ENCODE measurements at regions of chr3 and their contacts with region 1.

Region 1: GRCh38 chr3:119676771-119677640 is at the start of gene COX17:
- DNase-seq: peak; percentile 87
- ATAC-seq: peak; percentile 83
- H3K4me3 Mint-ChIP-seq: peak within 1 kb of the TSS; percentile 96
- H3K27ac Mint-ChIP-seq: peak within 1 kb of the TSS; percentile 98
- H3K4me1 Mint-ChIP-seq: peaks cover 28% of the 10 kb centered on the region
- H3K27me3 Mint-ChIP-seq: no peaks in the 10 kb centered on the region
- CTCF ChIP-seq: no peak
- total RNA-seq, gene COX17: 58.8 and 58.9 TPM in 2 replicates

Region 2: DNA sequence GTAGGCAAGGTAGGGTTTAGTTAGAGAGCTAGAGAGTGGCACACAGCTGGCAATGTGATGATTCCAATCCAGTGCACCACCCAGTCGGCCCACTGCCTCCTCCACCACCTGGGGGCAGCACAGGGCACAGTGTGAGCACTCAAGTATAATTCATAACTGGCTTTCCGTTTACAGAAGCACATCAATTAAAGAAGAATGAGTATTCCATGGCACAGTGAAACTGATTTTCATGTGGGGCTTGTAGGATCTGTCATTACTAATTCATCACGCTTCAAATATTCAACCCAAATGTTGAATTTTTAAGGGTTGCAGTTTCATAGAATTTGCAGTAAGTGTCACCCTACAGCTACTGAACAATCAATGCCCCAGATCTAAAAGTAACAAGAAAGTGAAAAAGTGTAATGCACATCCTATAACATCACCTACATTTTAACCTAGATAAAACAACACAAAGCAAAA is 792.2 kb before region 1 on chr3:
- CTCF ChIA-PET with region 1: interaction called, 47 read pairs
- POLR2A ChIA-PET with region 1: no interaction called
- intact Hi-C with region 1: loop called (anchors 1 kb)
- DNase-seq: peak; percentile 44
- ATAC-seq: peak; percentile 75
- H3K4me3 Mint-ChIP-seq: no peak overlapping the region
- H3K27ac Mint-ChIP-seq: no peak overlapping the region
- H3K4me1 Mint-ChIP-seq: no peaks in the 10 kb centered on the region
- H3K27me3 Mint-ChIP-seq: peaks cover 20% of the 10 kb centered on the region
- CTCF ChIP-seq: peak; percentile 74

Region 3: DNA sequence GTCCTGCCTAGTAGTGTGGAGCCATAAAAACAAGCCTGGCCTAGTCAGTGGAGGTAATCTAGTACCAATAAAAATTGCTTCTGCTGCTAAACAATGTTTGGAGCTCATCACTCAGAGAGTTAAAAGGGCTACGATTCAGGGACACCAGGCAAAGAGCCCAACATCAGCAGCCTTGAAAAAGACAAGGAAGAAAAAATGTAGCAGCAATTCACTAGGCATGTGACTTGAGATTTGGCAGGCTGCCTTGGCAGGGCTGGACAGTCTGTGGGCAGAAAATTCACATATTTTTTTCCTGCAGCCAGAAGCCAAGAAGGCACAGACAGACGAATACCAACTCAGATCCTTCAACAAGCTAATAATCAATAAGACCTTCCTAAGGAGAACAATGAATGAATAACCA is 689.5 kb before region 1 on chr3:
- CTCF ChIA-PET with region 1: no interaction called
- POLR2A ChIA-PET with region 1: no interaction called
- intact Hi-C with region 1: no loop called
- DNase-seq: no peak
- ATAC-seq: no peak
- H3K4me3 Mint-ChIP-seq: no peak overlapping the region
- H3K27ac Mint-ChIP-seq: no peak overlapping the region
- H3K4me1 Mint-ChIP-seq: no peaks in the 10 kb centered on the region
- H3K27me3 Mint-ChIP-seq: peaks cover 7% of the 10 kb centered on the region
- CTCF ChIP-seq: no peak

Region 4: GRCh38 chr3:119279101-119279554 is 397.9 kb before region 1 on chr3:
- CTCF ChIA-PET with region 1: interaction called, 17 read pairs
- POLR2A ChIA-PET with region 1: no interaction called
- intact Hi-C with region 1: loop called (anchors 1 kb)
- DNase-seq: no peak
- ATAC-seq: no peak
- H3K4me3 Mint-ChIP-seq: no peak overlapping the region
- H3K27ac Mint-ChIP-seq: no peak overlapping the region
- H3K4me1 Mint-ChIP-seq: peaks cover 3% of the 10 kb centered on the region
- H3K27me3 Mint-ChIP-seq: no peaks in the 10 kb centered on the region
- CTCF ChIP-seq: no peak

Region 5: DNA sequence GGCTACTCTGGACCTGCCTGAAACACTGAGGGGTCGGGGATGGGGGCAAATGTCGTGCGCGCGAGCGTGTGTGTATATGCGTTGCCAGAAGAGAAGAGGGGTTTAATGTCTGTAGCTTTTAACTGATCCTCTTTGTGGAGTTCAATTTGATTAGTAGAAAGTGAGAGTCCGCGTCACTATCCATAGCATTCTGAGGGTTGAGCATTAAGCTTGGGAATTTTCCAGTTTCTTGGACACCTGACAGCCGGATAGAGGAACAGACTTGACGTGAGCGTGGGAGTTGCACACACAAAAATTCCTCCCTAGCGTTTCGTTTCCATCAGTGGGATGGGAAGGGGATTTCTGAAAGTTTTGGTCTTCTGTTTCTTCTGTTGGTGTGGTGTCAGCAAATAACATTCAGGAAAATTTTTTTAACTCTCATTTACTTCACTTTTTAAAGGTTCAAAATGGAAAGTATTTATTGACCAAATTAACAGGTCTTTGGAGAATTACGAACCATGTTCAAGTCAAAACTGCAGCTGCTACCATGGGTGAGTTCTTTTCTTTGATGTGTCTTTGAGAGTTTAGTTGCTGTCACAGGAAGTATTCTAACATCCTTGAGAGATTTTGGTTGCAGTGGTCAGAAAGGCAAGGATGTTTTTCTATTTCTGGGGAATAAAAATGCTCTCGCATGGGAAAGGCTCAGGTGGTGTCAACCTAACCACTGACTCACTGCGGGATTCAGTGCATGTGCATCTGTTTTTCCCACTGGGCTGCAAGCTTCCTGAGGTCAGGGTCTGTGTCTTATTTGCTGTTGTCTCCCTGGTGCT is 207.4 kb before region 1 on chr3:
- CTCF ChIA-PET with region 1: interaction called, 4 read pairs
- POLR2A ChIA-PET with region 1: interaction called, 6 read pairs
- intact Hi-C with region 1: loop called (anchors 1 kb)
- DNase-seq: no peak
- ATAC-seq: peak; percentile 45
- H3K4me3 Mint-ChIP-seq: peak overlapping the region; percentile 93
- H3K27ac Mint-ChIP-seq: peak overlapping the region; percentile 90
- H3K4me1 Mint-ChIP-seq: peaks cover 32% of the 10 kb centered on the region
- H3K27me3 Mint-ChIP-seq: no peaks in the 10 kb centered on the region
- CTCF ChIP-seq: no peak

Region 6: DNA sequence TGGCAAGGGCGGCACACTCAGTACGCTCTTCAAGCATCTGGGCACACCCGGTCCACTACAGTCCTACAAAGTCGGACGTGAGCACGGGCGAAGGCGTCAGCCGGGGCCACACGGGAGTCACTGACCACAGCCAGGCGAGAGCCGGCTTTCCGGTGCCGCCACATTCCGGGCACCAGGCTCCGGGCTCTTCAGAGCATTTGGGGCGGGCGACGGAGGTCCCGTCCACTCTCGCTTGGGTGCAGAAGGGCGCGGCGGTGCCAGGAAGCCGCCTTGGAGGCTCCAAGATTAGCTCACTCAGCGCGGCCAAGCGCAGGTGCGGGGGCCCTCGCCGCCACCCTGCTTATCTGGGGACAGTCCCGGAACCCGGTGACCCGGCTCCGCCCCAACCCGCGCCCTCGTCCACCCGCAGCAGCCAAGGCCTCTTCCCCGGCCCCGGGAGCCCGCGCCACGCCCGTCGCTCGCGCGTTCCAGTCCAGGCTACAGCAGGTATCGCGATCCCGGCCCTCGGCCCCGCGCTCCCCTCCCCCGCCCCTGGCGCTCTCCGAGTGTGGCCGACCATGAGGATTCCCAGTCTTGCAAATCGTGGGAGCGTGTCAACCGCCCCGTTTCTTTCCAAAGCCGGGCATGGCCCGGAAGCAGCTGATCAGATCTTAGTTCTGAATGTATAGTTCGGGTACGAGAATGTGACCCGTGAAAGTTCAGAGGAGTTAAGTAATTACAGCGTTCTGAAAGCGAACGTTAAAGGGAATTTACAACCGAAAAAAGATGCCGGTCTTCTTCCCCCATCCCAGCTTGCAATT is 97.4 kb before region 1 on chr3 and contains the start of gene ADPRH:
- CTCF ChIA-PET with region 1: interaction called, 4 read pairs
- POLR2A ChIA-PET with region 1: interaction called, 23 read pairs
- intact Hi-C with region 1: loop called (anchors 1 kb)
- DNase-seq: peak; percentile 76
- ATAC-seq: peak; percentile 76
- H3K4me3 Mint-ChIP-seq: peak within 1 kb of the TSS; percentile 97
- H3K27ac Mint-ChIP-seq: peak within 1 kb of the TSS; percentile 99
- H3K4me1 Mint-ChIP-seq: peaks cover 37% of the 10 kb centered on the region
- H3K27me3 Mint-ChIP-seq: no peaks in the 10 kb centered on the region
- CTCF ChIP-seq: no peak
- total RNA-seq, gene ADPRH: 41.2 and 43.8 TPM in 2 replicates

Region 7: GRCh38 chr3:119662604-119663373 is 14.2 kb before region 1 on chr3:
- CTCF ChIA-PET with region 1: interaction called, 5 read pairs
- POLR2A ChIA-PET with region 1: interaction called, 20 read pairs
- intact Hi-C with region 1: loop called (anchors 1 kb)
- DNase-seq: no peak
- ATAC-seq: no peak
- H3K4me3 Mint-ChIP-seq: no peak overlapping the region
- H3K27ac Mint-ChIP-seq: peak overlapping the region; percentile 67
- H3K4me1 Mint-ChIP-seq: peaks cover 68% of the 10 kb centered on the region
- H3K27me3 Mint-ChIP-seq: no peaks in the 10 kb centered on the region
- CTCF ChIP-seq: no peak

Region 8: DNA sequence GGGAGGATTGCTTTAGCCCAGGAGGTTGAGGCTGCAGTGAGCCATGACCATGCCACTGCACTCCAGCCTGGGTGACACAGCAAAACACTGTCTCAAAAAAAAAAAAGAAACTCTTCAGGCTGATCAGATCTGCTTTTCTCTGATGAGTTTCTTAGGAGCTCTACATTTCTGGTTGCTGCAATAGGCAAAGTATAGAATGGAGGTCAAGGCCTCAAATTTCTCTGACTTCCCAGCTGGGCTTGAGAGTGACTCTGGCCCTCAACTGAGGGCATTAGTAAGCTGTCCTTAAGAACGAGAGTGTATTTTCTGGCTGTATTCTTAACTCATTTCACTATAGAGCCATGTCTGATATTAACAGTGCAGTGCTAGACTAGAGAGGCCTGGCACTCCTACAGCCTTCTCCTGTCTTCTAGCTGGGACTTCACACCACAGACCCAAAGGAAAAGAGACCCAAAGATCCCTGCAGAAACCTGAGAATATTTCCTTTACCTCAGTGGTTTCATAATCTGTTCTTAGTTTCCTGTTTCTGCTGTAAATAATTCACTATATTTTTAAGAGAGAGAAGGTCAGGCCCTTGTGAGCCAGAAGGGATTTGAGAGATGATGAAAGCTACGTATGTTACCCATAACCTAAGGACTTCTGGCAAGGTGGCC is 102.9 kb after region 1 on chr3:
- CTCF ChIA-PET with region 1: no interaction called
- POLR2A ChIA-PET with region 1: no interaction called
- intact Hi-C with region 1: no loop called
- DNase-seq: no peak
- ATAC-seq: no peak
- H3K4me3 Mint-ChIP-seq: no peak overlapping the region
- H3K27ac Mint-ChIP-seq: no peak overlapping the region
- H3K4me1 Mint-ChIP-seq: no peaks in the 10 kb centered on the region
- H3K27me3 Mint-ChIP-seq: no peaks in the 10 kb centered on the region
- CTCF ChIP-seq: no peak

Region 9: GRCh38 chr3:119973289-119973688 is 296.3 kb after region 1 on chr3:
- CTCF ChIA-PET with region 1: no interaction called
- POLR2A ChIA-PET with region 1: no interaction called
- intact Hi-C with region 1: no loop called
- DNase-seq: no peak
- ATAC-seq: no peak
- H3K4me3 Mint-ChIP-seq: no peak overlapping the region
- H3K27ac Mint-ChIP-seq: no peak overlapping the region
- H3K4me1 Mint-ChIP-seq: peaks cover 3% of the 10 kb centered on the region
- H3K27me3 Mint-ChIP-seq: no peaks in the 10 kb centered on the region
- CTCF ChIP-seq: no peak